ENCODE measurements at regions of chr13 and their contacts with region 1.

Region 1: DNA sequence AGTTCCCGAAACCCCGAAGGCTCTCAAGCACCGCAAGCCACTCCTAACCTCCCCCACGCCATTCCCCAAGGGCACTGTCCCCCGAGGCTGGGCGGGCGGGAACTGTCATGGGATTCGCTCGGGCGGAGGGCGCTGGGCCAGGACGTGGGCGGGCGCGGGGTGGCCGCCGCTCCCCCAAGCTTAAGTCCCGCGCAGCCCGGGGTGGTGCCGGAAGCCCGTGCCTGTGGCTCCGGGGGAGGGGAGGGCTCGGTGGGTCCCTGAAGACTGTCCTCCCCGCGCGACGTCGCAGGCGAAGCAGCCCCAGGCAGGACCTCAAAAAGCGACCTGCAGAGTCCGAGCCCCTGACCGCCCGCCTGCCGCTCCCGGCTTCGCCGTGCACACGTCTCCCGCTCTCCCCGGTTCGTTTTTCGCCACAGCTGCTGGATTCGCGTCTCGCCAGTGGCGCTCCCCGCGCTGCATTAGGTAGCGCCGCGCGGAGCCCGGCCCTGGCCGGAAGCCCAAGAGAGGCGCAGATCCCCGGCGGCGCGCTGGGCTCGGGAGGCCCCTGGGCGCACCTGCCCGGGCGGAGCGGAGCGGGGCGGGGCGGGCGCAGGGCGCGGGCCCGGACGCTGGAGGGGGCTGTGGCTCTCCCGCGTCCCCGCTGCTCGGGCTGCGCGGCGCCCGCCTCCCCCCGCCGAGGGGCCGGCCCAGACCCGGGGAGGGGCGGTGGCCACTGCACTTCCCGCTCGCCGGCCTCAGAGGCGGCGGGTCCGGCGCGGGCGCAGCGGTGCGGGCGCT is at the start of gene FARP1:
- DNase-seq: peak; percentile 77
- H3K4me3 ChIP-seq: peak within 1 kb of the TSS; percentile 56 to 66 (median 63)
- H3K27ac ChIP-seq: no peak within 1 kb of the TSS
- H3K4me1 ChIP-seq: peaks cover 16% of the 10 kb centered on the region
- H3K27me3 ChIP-seq: peaks cover 4% of the 10 kb centered on the region
- CTCF ChIP-seq: peak in 1 of 2 donors; percentile 24
- total RNA-seq, gene FARP1: 27.5 to 42.8 TPM

Region 2: DNA sequence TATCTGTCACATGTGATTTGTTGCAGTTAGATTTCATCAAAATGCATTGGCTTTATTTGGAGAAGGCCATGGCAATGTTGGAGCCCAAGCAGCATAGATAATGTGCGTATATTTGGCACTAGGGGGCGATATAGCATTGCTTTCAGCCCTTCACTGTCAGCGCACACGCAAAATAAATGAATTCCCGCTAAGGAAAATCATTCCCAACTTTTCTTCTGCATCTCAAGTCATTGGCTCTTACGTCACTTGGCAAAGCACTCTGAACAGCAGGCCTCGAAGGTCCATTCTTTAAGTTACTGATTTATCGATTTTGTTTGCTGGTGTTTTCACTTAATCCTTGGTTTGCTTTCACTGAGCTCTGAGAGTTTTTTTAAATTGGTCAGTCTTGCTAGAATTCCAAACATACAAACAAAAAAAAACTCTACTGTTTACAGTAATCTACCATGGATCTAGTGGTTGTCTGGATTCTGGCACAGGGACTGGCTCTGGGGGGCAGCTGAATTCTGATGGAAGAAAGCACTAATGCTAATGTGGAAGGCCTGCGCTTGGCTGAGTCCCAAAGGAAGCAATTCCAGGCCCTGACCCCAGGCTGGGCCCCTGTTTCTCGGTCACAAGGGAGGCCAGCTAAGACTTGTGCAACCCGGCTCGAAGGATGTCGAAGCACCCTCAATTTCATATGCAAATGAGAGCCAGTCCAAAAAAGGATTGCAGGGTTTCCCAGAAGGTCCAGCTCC is 286.8 kb before region 1 on chr13:
- CTCF ChIA-PET with region 1: no interaction called
- dilution Hi-C with region 1: no loop called
- in situ Hi-C with region 1: no loop called
- intact Hi-C with region 1: loop called (anchors 5 kb)
- DNase-seq: peak; percentile 39
- H3K4me3 ChIP-seq: no peak overlapping the region
- H3K27ac ChIP-seq: no peak overlapping the region
- H3K4me1 ChIP-seq: no peaks in the 10 kb centered on the region
- H3K27me3 ChIP-seq: no peaks in the 10 kb centered on the region
- CTCF ChIP-seq: peak; percentile 83 to 93

Region 3: GRCh38 chr13:98445340-98446233 is 303.0 kb after region 1 on chr13:
- CTCF ChIA-PET with region 1: no interaction called
- dilution Hi-C with region 1: loop called (anchors 10 kb)
- in situ Hi-C with region 1: loop called in 1 of 2 experiments (anchors 25 kb)
- intact Hi-C with region 1: loop called (anchors 1 kb)
- DNase-seq: peak; percentile 50
- H3K4me3 ChIP-seq: no peak overlapping the region
- H3K27ac ChIP-seq: no peak overlapping the region
- H3K4me1 ChIP-seq: peaks cover 24% of the 10 kb centered on the region
- H3K27me3 ChIP-seq: no peaks in the 10 kb centered on the region
- CTCF ChIP-seq: peak; percentile 86 to 97

Region 4: GRCh38 chr13:98653463-98653985 is 511.0 kb after region 1 on chr13:
- CTCF ChIA-PET with region 1: no interaction called
- dilution Hi-C with region 1: loop called (anchors 25 kb)
- in situ Hi-C with region 1: no loop called
- intact Hi-C with region 1: loop called (anchors 5 kb)
- DNase-seq: peak; percentile 76
- H3K4me3 ChIP-seq: no peak overlapping the region
- H3K27ac ChIP-seq: no peak overlapping the region
- H3K4me1 ChIP-seq: no peaks in the 10 kb centered on the region
- H3K27me3 ChIP-seq: no peaks in the 10 kb centered on the region
- CTCF ChIP-seq: peak; percentile 81 to 95

Region 5: DNA sequence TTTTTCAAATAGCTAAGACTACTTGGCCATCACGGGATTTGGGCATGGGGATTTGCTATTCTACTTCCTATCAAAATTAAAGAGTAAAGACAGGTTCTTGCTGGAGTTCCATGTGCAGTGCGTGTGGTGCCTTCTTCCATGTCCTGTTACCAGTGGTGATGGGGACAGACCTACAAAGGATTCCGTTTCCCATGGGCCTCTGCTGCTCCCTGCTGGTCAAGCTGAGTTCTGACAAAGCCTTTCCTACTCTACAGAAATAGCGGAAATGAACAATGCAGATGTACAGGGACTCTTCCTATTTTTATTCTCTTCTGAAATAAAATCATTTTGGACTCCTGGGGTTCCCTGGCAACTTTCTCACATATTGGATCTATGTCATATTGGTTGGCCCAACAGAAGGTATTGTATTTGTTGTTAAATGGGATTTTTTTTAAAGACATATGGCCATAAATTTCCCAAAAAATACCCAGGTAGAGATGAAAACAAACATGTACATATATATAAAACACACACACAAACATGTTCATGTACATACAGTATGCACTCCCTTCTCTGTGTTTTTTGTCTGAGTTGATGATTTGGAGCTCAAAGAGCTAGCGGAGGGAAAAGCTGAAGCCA is 700.4 kb after region 1 on chr13:
- CTCF ChIA-PET with region 1: no interaction called
- dilution Hi-C with region 1: no loop called
- in situ Hi-C with region 1: no loop called
- intact Hi-C with region 1: loop called (anchors 10 kb)
- DNase-seq: peak; percentile 48
- H3K4me3 ChIP-seq: no peak overlapping the region
- H3K27ac ChIP-seq: no peak overlapping the region
- H3K4me1 ChIP-seq: peaks cover 6% of the 10 kb centered on the region
- H3K27me3 ChIP-seq: no peaks in the 10 kb centered on the region
- CTCF ChIP-seq: peak; percentile 88 to 91

Measured in mammary epithelial cell (primary cell).